Breast epithelium (tissue), 4 donors: ENCODE measurements at regions of chr15 and their contacts with region 1.

Region 1: GRCh38 chr15:68235022-68235421 is 5.5 kb upstream of the CLN6 start:
- DNase-seq: no peak
- H3K4me3 ChIP-seq: no peak overlapping the region
- H3K27ac ChIP-seq: no peak overlapping the region
- H3K4me1 ChIP-seq: no peaks in the 10 kb centered on the region
- H3K27me3 ChIP-seq: no peaks in the 10 kb centered on the region
- CTCF ChIP-seq: no peak
- POLR2A ChIP-seq: no peak

Region 2: GRCh38 chr15:66692808-66693596 is 1542.0 kb before region 1 on chr15:
- intact Hi-C with region 1: no loop called
- DNase-seq: no peak
- H3K4me3 ChIP-seq: no peak overlapping the region
- H3K27ac ChIP-seq: no peak overlapping the region
- H3K4me1 ChIP-seq: no peaks in the 10 kb centered on the region
- H3K27me3 ChIP-seq: no peaks in the 10 kb centered on the region
- CTCF ChIP-seq: no peak
- POLR2A ChIP-seq: no peak

Region 3: DNA sequence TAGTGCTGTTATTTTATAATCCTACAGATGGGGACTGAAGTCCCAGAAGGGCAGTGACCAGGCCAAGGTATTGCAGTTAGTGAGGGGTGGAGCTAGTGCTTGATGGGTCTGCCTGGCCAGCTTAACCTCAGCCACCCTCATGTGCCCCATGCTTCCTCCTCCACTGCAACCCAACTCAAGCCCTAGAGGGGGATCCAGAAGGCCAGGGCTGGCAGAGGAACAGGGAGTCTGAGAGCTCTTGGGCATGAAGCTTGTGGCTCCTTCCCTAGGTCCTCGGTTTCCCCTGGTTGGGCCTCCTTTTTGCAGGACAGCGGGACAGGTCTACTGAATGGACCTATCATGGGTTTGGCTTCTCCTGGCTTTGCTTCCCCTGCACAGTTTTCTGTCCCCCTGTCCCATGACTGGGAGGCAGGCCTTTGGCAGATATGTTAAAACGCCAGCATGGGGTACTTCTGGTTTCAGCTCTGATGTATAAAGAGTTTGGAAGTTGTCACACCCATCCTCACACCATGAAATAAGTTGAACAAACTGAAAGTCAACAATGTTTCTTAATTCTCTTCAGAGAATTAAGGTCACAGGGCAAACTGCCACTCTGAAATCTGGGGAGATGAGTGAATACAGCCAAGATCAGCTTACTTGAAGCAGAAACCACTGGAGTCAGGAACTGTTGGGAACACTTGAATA is 1429.7 kb before region 1 on chr15:
- intact Hi-C with region 1: loop called (anchors 5 kb)
- DNase-seq: no peak
- H3K4me3 ChIP-seq: no peak overlapping the region
- H3K27ac ChIP-seq: peak overlapping the region in 1 of 2 donors; percentile 74
- H3K4me1 ChIP-seq: peaks cover 7 to 11% of the 10 kb centered on the region in 2 donors
- H3K27me3 ChIP-seq: no peaks in the 10 kb centered on the region
- CTCF ChIP-seq: no peak
- POLR2A ChIP-seq: no peak

Region 4: DNA sequence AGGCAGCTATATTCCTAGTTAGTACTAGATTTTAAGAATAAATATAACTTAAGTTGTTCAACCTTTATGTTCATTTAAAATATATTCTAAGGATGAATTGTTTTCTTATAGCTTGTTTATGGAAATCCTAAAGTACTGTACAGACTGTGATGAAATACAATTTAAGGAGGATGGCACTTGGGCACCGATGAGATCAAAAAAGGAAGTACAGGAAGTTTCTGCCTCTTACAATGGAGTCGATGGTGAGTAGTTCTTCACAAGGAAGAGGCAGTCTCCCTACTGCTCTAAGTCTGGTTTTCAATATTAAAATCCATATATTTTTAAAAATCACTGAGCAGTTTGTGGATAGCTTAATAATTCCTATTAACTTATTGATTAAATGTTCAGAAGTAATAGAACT is 59.5 kb before region 1 on chr15:
- intact Hi-C with region 1: no loop called
- DNase-seq: no peak
- H3K4me3 ChIP-seq: no peak overlapping the region
- H3K27ac ChIP-seq: no peak overlapping the region
- H3K4me1 ChIP-seq: no peaks in the 10 kb centered on the region
- H3K27me3 ChIP-seq: no peaks in the 10 kb centered on the region
- CTCF ChIP-seq: no peak
- POLR2A ChIP-seq: no peak

Region 5: GRCh38 chr15:68187559-68187958 is 47.5 kb before region 1 on chr15:
- intact Hi-C with region 1: no loop called
- DNase-seq: peak in 1 of 2 donors; percentile 76
- H3K4me3 ChIP-seq: peak overlapping the region; percentile 5 to 23 (median 10)
- H3K27ac ChIP-seq: peak overlapping the region; percentile 34 to 64
- H3K4me1 ChIP-seq: no peaks in the 10 kb centered on the region
- H3K27me3 ChIP-seq: no peaks in the 10 kb centered on the region
- CTCF ChIP-seq: no peak
- POLR2A ChIP-seq: no peak